Activated naive CD4-positive, alpha-beta T cell treated with anti-CD3 and anti-CD28 coated beads for 36 hours (primary cell): ENCODE measurements at regions of chr12 and their contacts with region 1.

Region 1: GRCh38 chr12:89756585-89757321 is 48.1 kb upstream of the ATP2B1 start:
- DNase-seq: peak; percentile 48
- H3K4me3 Mint-ChIP-seq: no peak overlapping the region
- H3K27ac Mint-ChIP-seq: peak overlapping the region; percentile 37
- H3K4me1 Mint-ChIP-seq: peaks cover 23% of the 10 kb centered on the region
- H3K27me3 Mint-ChIP-seq: no peaks in the 10 kb centered on the region

Region 2: DNA sequence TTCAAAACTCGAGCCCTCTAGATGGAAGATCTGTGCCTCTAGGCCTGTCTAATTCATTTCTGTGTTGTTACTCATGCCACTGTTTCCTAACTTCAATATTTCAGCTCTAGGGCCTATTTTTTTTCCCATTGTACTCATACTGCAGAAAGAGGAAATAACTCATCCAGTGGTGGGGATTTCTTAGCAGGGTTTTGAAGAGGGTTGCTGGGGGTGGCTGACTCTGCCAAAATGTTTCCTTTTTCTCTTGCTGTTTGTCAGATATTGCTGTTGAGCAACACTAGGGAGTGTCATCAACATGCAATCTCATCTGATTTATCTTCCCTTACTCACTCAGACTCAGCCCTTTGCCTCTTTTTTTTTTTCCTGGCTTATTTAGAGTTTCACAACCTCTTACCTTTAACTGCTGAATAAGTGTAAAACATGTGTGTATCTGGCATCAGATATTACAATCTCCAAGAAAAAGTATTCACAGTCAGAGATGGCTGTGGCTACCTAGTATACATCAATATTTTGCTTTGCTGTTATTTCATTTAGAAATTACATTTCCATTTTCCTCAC is 594.0 kb before region 1 on chr12:
- CTCF ChIA-PET with region 1: no interaction called
- intact Hi-C with region 1: loop called (anchors 1 kb)
- DNase-seq: peak; percentile 81
- H3K4me3 Mint-ChIP-seq: no peak overlapping the region
- H3K27ac Mint-ChIP-seq: no peak overlapping the region
- H3K4me1 Mint-ChIP-seq: peaks cover 8% of the 10 kb centered on the region
- H3K27me3 Mint-ChIP-seq: no peaks in the 10 kb centered on the region

Region 3: GRCh38 chr12:89597770-89598169 is 159.0 kb before region 1 on chr12:
- CTCF ChIA-PET with region 1: no interaction called
- intact Hi-C with region 1: loop called (anchors 5 kb)
- DNase-seq: no peak
- H3K4me3 Mint-ChIP-seq: no peak overlapping the region
- H3K27ac Mint-ChIP-seq: peak overlapping the region; percentile 66
- H3K4me1 Mint-ChIP-seq: peaks cover 23% of the 10 kb centered on the region
- H3K27me3 Mint-ChIP-seq: no peaks in the 10 kb centered on the region

Region 4: GRCh38 chr12:89856431-89856830 is 99.7 kb after region 1 on chr12:
- CTCF ChIA-PET with region 1: no interaction called
- intact Hi-C with region 1: loop called (anchors 1 kb)
- DNase-seq: no peak
- H3K4me3 Mint-ChIP-seq: no peak overlapping the region
- H3K27ac Mint-ChIP-seq: no peak overlapping the region
- H3K4me1 Mint-ChIP-seq: peaks cover 42% of the 10 kb centered on the region
- H3K27me3 Mint-ChIP-seq: no peaks in the 10 kb centered on the region

Region 5: DNA sequence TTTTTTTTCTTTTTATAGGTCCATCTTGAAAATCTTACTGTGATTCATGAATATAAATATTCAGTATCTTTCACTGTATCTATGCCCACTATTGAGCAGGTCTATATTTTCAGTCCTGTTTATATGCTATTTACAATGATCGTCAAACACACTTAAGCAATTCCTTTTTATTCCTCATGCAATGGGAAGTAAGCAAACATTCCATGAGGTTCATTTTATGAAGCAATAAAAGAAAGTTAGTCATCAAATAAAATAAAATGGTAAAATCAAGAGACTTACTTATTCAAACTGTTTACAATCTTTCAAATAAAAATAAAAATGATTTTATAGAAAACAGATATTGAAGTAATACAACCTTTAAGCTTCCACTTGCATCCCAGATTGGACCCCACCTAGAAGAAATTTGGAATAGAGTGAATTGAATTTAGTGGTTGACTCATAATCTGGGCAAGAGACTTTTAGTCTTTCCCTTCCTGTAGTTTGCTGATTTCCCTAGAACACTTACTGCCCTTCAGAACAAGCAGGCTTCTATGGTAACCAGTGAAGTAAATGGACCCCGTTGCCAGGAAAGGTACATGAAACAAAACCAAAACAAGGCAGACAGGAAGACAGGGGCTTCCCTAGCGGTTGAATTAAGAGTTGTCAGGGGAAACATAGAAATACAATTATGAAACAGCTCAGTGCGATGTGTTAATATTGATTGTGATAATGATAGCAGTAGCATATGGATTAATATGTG is 192.9 kb after region 1 on chr12:
- CTCF ChIA-PET with region 1: no interaction called
- intact Hi-C with region 1: loop called (anchors 1 kb)
- DNase-seq: peak; percentile 68
- H3K4me3 Mint-ChIP-seq: no peak overlapping the region
- H3K27ac Mint-ChIP-seq: no peak overlapping the region
- H3K4me1 Mint-ChIP-seq: peaks cover 39% of the 10 kb centered on the region
- H3K27me3 Mint-ChIP-seq: no peaks in the 10 kb centered on the region

Region 6: GRCh38 chr12:90280564-90281058 is 523.9 kb after region 1 on chr12:
- CTCF ChIA-PET with region 1: no interaction called
- intact Hi-C with region 1: loop called (anchors 1 kb)
- DNase-seq: peak; percentile 43
- H3K4me3 Mint-ChIP-seq: no peak overlapping the region
- H3K27ac Mint-ChIP-seq: peak overlapping the region; percentile 56
- H3K4me1 Mint-ChIP-seq: peaks cover 17% of the 10 kb centered on the region
- H3K27me3 Mint-ChIP-seq: peaks cover 9% of the 10 kb centered on the region